Naive thymus-derived CD4-positive, alpha-beta T cell (primary cell): ENCODE measurements at regions of chr9 and their contacts with region 1.

Region 1: GRCh38 chr9:127224178-127224882 is 40.2 kb upstream of the GARNL3 start:
- DNase-seq: peak; percentile 81 to 90 (median 85)
- ATAC-seq: peak; percentile 82
- H3K4me3 ChIP-seq: peak overlapping the region; percentile 51
- H3K4me3 Mint-ChIP-seq: peak overlapping the region; percentile 74 to 93 (median 85)
- H3K27ac ChIP-seq: no peak overlapping the region
- H3K27ac Mint-ChIP-seq: peak overlapping the region; percentile 8 to 94 (median 82)
- H3K4me1 ChIP-seq: peaks cover 10 to 31% of the 10 kb centered on the region in 2 donors
- H3K4me1 Mint-ChIP-seq: peaks cover 24 to 49% (median 41%) of the 10 kb centered on the region in 7 donors
- H3K27me3 ChIP-seq: no peaks in the 10 kb centered on the region
- H3K27me3 Mint-ChIP-seq: peaks cover 0 to 58% (median 12%) of the 10 kb centered on the region in 5 donors

Region 2: DNA sequence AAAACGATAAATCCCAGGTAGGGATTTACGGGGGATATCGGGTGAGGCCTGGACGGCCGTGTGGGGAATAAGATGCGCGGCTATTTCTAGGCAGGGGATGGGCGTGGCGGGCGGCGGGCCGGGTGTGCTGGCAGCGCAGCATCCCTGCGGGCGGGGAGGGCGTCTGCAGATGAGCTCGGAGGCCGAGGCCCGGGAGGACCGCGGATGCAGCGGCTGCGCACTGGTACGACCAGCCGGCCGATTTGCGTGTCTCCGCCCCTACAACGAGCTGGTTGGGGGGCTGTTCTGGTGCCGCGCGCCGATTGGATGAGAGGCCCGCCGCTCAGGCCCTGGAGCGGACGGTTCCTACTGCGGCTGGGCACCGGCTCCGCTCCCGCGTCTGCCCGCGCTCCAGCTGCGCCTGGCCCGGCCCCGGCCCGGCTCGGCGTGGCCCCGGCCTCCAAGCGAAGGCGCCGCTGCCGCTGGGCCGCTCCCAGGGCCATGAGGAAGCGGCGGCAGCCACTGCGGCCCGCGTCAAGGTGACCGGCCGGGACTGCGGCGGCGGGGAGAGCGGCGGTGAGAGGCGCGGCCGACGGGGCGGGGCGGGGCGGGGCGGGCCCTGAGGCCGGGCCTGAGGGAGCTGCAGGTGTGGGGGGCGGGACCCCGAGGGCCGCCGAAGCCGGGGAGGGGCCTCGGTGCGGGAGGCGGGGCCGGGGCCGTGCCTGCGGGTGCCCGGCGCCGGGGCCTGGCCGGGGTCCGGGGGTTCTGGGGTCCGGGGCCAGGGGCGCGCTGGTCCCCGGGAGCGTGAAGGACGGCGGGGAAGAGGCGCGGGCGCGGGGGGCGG is 309.7 kb before region 1 on chr9 and contains the start of gene RALGPS1:
- CTCF ChIA-PET with region 1: no interaction called
- POLR2A ChIA-PET with region 1: no interaction called
- intact Hi-C with region 1: loop called in 1 of 2 experiments (anchors 1 kb)
- DNase-seq: peak; percentile 68 to 88 (median 81)
- ATAC-seq: peak; percentile 98
- H3K4me3 ChIP-seq: peak within 1 kb of the TSS; percentile 47
- H3K4me3 Mint-ChIP-seq: peak within 1 kb of the TSS; percentile 73 to 90 (median 82)
- H3K27ac ChIP-seq: peak within 1 kb of the TSS; percentile 13
- H3K27ac Mint-ChIP-seq: peak within 1 kb of the TSS in 6 of 9 donors; percentile 14 to 89 (median 75)
- H3K4me1 ChIP-seq: no peaks in the 10 kb centered on the region
- H3K4me1 Mint-ChIP-seq: peaks cover 5 to 13% (median 7%) of the 10 kb centered on the region in 7 donors
- H3K27me3 ChIP-seq: no peaks in the 10 kb centered on the region
- H3K27me3 Mint-ChIP-seq: peaks cover 0 to 36% (median 0%) of the 10 kb centered on the region in 5 donors
- total RNA-seq, gene RALGPS1: 2.6 to 8.3 (median 5.8) TPM

Region 3: GRCh38 chr9:127244609-127245601 is 20.6 kb after region 1 on chr9:
- CTCF ChIA-PET with region 1: interaction called, 5 read pairs
- POLR2A ChIA-PET with region 1: interaction called, 3 read pairs
- intact Hi-C with region 1: loop called (anchors 1 kb)
- DNase-seq: peak; percentile 84 to 94 (median 91)
- ATAC-seq: peak; percentile 100
- H3K4me3 ChIP-seq: peak overlapping the region; percentile 85
- H3K4me3 Mint-ChIP-seq: peak overlapping the region; percentile 80 to 92 (median 88)
- H3K27ac ChIP-seq: no peak overlapping the region
- H3K27ac Mint-ChIP-seq: peak overlapping the region in 7 of 9 donors; percentile 28 to 80 (median 59)
- H3K4me1 ChIP-seq: peaks cover 0 to 5% of the 10 kb centered on the region in 2 donors
- H3K4me1 Mint-ChIP-seq: peaks cover 4 to 16% (median 8%) of the 10 kb centered on the region in 7 donors
- H3K27me3 ChIP-seq: no peaks in the 10 kb centered on the region
- H3K27me3 Mint-ChIP-seq: peaks cover 0 to 24% (median 4%) of the 10 kb centered on the region in 5 donors

Region 4: DNA sequence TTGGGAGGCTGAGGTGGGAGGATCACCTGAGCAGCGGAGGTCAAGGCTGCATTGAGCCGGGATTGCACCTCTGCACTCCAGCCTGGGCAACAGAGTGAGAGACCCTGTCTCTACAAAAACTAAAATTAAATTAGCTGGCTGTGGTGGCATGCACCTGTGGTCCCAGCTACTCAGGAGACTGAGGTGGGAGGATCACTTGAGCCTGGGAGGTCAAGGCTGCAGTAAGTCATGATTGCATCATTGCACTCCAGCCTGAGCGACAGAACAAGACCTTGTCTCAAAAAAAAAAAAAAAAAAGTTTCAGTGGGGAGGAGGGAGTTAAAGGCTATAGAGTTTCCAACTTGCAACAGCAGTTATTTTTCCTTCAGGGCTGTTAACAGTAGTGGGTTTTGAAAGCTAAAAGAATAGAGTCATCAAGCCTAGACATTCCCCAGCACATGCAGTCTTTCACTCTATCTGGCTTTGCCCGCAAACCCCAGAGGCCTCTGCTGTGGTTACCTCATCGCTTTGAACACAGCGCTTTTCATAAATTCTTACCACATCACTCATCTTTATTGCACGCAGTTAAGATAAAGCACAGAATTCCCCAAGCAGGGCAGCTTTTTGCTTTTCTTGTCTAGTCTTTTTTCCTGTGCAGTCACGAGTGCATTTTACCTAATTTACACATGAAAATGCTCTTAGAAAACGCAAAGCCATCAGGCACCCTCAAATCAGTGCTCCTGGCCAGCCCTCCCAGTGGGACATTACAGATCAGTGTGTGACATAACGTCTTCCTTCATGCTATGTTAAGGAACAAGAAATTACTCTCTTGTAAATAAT is 163.9 kb after region 1 on chr9:
- CTCF ChIA-PET with region 1: no interaction called
- POLR2A ChIA-PET with region 1: no interaction called
- intact Hi-C with region 1: loop called in 1 of 2 experiments (anchors 1 kb)
- DNase-seq: peak; percentile 67 to 97 (median 94)
- ATAC-seq: peak; percentile 98
- H3K4me3 ChIP-seq: no peak overlapping the region
- H3K4me3 Mint-ChIP-seq: peak overlapping the region; percentile 16 to 73 (median 55)
- H3K27ac ChIP-seq: no peak overlapping the region
- H3K27ac Mint-ChIP-seq: peak overlapping the region; percentile 19 to 94 (median 82)
- H3K4me1 ChIP-seq: peaks cover 13 to 20% of the 10 kb centered on the region in 2 donors
- H3K4me1 Mint-ChIP-seq: peaks cover 23 to 44% (median 28%) of the 10 kb centered on the region in 7 donors
- H3K27me3 ChIP-seq: peaks cover 6 to 46% of the 10 kb centered on the region in 2 donors
- H3K27me3 Mint-ChIP-seq: peaks cover 65 to 78% (median 72%) of the 10 kb centered on the region in 5 donors

Region 5: GRCh38 chr9:127396808-127397497 is 172.6 kb after region 1 on chr9 and contains the start of gene SLC2A8:
- CTCF ChIA-PET with region 1: no interaction called
- POLR2A ChIA-PET with region 1: no interaction called
- intact Hi-C with region 1: loop called in 1 of 2 experiments (anchors 2 kb)
- DNase-seq: peak; percentile 33 to 87 (median 61)
- ATAC-seq: peak; percentile 97
- H3K4me3 ChIP-seq: peak within 1 kb of the TSS; percentile 22
- H3K4me3 Mint-ChIP-seq: peak within 1 kb of the TSS; percentile 50 to 82 (median 64)
- H3K27ac ChIP-seq: no peak within 1 kb of the TSS
- H3K27ac Mint-ChIP-seq: peak within 1 kb of the TSS in 2 of 9 donors; percentile 37 to 59
- H3K4me1 ChIP-seq: peaks cover 10 to 15% of the 10 kb centered on the region in 2 donors
- H3K4me1 Mint-ChIP-seq: peaks cover 11 to 25% (median 16%) of the 10 kb centered on the region in 7 donors
- H3K27me3 ChIP-seq: peaks cover 0 to 57% of the 10 kb centered on the region in 2 donors
- H3K27me3 Mint-ChIP-seq: peaks cover 51 to 80% (median 72%) of the 10 kb centered on the region in 5 donors
- total RNA-seq, gene SLC2A8: 0.27 to 4.8 (median 1.3) TPM

Region 6: GRCh38 chr9:127568971-127569885 is 344.9 kb after region 1 on chr9:
- CTCF ChIA-PET with region 1: no interaction called
- POLR2A ChIA-PET with region 1: no interaction called
- intact Hi-C with region 1: loop called (anchors 2 to 5 kb)
- DNase-seq: peak; percentile 20 to 82 (median 60)
- ATAC-seq: peak; percentile 91
- H3K4me3 ChIP-seq: peak overlapping the region; percentile 52
- H3K4me3 Mint-ChIP-seq: peak overlapping the region; percentile 81 to 90 (median 86)
- H3K27ac ChIP-seq: peak overlapping the region; percentile 62
- H3K27ac Mint-ChIP-seq: peak overlapping the region in 8 of 9 donors; percentile 65 to 96 (median 84)
- H3K4me1 ChIP-seq: peaks cover 12 to 18% of the 10 kb centered on the region in 2 donors
- H3K4me1 Mint-ChIP-seq: peaks cover 19 to 56% (median 21%) of the 10 kb centered on the region in 7 donors
- H3K27me3 ChIP-seq: no peaks in the 10 kb centered on the region
- H3K27me3 Mint-ChIP-seq: no peaks in the 10 kb centered on the region